ENCODE measurements at regions of chr1 and their contacts with region 1.

Region 1: GRCh38 chr1:204363335-204364124 is 3.8 kb upstream of the PLEKHA6 start:
- DNase-seq: peak; percentile 76
- ATAC-seq: peak; percentile 86

Region 2: DNA sequence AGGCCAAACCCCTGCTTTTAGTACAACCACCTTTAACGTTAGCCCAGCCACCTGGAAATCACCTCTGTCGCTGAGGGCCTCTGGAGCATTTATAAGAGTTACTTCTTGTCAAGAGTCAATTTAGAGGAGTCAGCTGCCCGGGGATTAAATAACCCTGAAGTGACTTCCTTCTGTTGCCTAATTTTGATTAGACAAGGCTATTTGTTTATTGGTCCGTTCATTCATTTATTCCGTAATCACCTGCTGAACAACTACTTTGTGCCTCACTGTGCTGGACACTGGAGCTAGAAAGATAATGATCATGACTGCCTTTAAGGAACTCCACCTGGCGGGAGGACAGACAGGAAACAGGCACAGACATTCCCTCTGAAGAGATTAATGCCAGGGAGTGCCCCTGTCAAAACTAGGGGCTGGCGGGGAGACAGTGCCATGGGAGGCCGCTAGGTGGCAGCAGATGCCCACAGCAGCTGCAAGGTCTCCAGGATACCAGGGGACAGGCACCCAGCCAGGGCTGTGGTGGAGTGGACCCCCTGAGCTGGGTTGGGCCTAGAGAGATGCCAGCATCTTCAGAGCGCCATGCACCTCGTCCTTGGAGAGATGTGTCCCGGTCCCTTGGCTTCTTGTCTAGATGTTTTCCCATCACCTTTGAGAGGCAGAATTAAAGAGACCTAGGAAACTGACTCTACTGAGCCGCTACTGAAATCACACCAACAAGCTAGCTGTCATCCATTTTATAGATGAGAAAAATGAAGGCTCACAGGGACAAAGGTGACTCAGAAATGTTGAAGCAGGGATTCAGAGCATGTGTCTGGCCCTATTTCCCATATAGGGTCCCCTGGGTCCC is 201.1 kb before region 1 on chr1:
- intact Hi-C with region 1: loop called (anchors 2 kb)
- DNase-seq: peak; percentile 88
- ATAC-seq: peak; percentile 96

Region 3: DNA sequence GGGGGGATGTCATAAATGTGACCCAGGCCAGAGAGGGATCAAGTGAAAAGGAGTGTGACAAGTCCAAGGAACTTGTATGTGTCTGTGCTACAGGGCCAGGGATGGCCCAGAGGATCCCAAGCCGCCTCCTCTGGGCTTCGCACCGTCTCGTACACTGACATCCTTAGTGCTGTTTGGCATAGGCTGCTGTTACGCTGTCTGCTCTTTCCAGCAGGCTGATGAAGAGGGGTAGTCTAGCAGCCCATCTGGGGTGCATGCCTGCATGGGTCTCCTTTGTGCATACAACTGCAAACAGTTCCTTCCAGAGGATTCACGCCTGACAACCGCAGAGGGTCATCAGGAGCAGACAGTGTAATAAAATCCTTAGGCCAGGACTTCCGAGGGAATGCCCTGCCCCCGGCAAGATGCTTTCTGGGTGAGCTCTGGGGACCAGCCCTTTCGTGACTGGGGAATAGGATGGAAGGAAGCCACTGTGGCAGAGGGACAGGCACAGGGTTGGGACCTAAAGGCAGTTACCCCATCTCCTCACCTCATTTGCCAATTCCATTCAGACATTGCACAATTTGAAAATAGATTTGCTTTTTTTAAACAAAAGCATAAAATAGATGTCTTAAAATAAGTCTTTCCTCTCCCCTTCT is 143.4 kb before region 1 on chr1:
- intact Hi-C with region 1: loop called (anchors 5 kb)
- DNase-seq: no peak
- ATAC-seq: no peak

Region 4: GRCh38 chr1:204257954-204258752 is 105.4 kb before region 1 on chr1:
- intact Hi-C with region 1: loop called (anchors 5 kb)
- DNase-seq: peak; percentile 74
- ATAC-seq: peak; percentile 64